ENCODE measurements at regions of chr5 and their contacts with region 1.

Region 1: DNA sequence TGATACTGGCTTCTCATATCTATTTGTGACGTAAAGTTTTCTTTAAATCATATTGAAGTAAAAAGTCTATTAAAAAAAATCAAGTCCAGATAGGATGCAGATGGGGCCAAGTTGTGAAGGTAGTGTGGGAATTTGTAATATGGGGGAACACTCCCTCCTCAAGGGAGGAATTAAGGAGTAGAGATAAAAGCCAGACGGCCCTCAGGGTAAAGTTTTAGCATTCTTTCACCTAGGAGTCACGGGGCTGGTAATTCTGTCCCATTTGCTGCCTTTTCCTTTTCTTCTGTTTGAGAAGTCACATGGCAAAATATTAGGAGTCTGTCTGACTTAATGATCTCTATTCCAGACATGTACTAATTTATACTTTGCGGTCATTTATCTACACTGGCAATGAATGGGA is 61.8 kb downstream of the SNX24 start:
- DNase-seq: no peak
- ATAC-seq: no peak
- H3K4me3 ChIP-seq: no peak overlapping the region
- H3K4me3 Mint-ChIP-seq: no peak overlapping the region
- H3K27ac ChIP-seq: no peak overlapping the region
- H3K27ac Mint-ChIP-seq: no peak overlapping the region
- H3K4me1 ChIP-seq: peaks cover 3 to 9% of the 10 kb centered on the region in 2 donors
- H3K4me1 Mint-ChIP-seq: peaks cover 4 to 11% (median 8%) of the 10 kb centered on the region in 7 donors
- H3K27me3 ChIP-seq: no peaks in the 10 kb centered on the region
- H3K27me3 Mint-ChIP-seq: no peaks in the 10 kb centered on the region

Region 2: DNA sequence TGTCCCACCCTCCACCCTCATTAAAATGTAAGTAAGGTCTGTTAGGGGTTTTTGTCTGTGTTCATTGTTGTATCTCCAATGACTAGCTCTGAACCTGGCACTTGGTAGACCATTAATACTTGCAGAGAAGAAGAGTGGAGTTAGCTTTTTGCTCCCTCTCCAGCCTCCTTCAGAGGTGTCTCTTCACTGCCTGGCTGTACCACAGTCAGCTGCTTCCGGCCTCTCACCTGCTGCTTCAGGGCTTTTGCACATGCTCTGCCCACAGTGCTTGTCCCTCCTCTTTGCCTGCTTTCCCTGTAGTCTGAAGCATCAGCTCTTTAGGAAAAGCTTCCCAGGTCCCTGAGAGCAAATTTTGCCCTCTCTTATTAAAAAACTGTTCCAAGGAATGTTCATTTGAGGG is 21.8 kb after region 1 on chr5:
- CTCF ChIA-PET with region 1: interaction called, 10 read pairs
- POLR2A ChIA-PET with region 1: no interaction called
- intact Hi-C with region 1: no loop called
- DNase-seq: no peak
- ATAC-seq: no peak
- H3K4me3 ChIP-seq: no peak overlapping the region
- H3K4me3 Mint-ChIP-seq: no peak overlapping the region
- H3K27ac ChIP-seq: no peak overlapping the region
- H3K27ac Mint-ChIP-seq: peak overlapping the region in 1 of 9 donors; percentile 23
- H3K4me1 ChIP-seq: no peaks in the 10 kb centered on the region
- H3K4me1 Mint-ChIP-seq: no peaks in the 10 kb centered on the region
- H3K27me3 ChIP-seq: no peaks in the 10 kb centered on the region
- H3K27me3 Mint-ChIP-seq: peaks cover 0 to 4% (median 0%) of the 10 kb centered on the region in 5 donors

Region 3: DNA sequence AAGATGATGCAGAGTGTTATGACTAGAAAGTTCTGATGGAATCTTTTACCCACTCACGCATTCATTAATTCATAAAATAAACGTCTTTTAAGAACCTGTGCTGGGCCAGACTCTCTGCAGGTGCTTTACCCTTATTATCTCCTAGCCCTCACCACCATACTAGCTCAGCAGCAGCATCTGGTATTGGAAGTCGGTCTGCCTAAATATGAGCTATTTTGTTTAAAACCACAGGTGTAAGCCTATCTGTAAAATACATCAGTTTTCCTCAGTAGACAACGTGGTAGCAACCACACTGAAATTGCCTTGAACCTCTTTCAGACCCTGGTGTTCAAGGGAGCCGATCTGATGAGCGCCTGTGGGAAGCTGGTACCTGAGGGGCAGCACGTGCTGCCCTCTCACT is 59.8 kb after region 1 on chr5:
- CTCF ChIA-PET with region 1: no interaction called
- POLR2A ChIA-PET with region 1: no interaction called
- intact Hi-C with region 1: no loop called
- DNase-seq: no peak
- ATAC-seq: no peak
- H3K4me3 ChIP-seq: no peak overlapping the region
- H3K4me3 Mint-ChIP-seq: no peak overlapping the region
- H3K27ac ChIP-seq: no peak overlapping the region
- H3K27ac Mint-ChIP-seq: no peak overlapping the region
- H3K4me1 ChIP-seq: no peaks in the 10 kb centered on the region
- H3K4me1 Mint-ChIP-seq: no peaks in the 10 kb centered on the region
- H3K27me3 ChIP-seq: no peaks in the 10 kb centered on the region
- H3K27me3 Mint-ChIP-seq: no peaks in the 10 kb centered on the region

Region 4: DNA sequence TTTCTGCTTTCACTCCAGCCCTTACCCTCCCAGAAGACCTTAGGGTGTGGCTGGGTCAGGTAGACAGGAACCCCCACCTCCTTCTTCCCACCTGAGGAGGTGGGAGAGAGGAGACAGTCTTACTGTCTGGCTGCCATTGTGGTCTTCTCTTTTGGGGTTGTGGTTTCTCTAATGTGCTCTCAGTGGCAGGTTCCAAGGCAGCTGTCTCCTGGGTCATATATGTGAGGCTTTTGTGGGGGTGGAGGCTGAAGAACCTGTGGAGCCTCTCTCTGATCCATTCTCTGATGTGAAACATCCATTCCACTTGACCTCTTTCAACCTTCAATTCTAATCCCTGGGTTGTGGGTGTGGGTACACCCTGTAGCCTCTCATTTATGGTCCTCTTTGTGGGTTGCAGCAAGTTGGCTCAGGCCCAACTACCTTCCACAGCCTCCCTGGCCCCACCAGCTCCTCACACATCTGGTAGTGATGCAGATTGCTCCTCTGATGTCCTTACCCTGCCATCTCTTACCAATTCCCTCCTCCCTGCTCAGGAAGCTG is 397.6 kb after region 1 on chr5:
- CTCF ChIA-PET with region 1: no interaction called
- POLR2A ChIA-PET with region 1: no interaction called
- intact Hi-C with region 1: no loop called
- DNase-seq: no peak
- ATAC-seq: no peak
- H3K4me3 ChIP-seq: no peak overlapping the region
- H3K4me3 Mint-ChIP-seq: no peak overlapping the region
- H3K27ac ChIP-seq: no peak overlapping the region
- H3K27ac Mint-ChIP-seq: no peak overlapping the region
- H3K4me1 ChIP-seq: no peaks in the 10 kb centered on the region
- H3K4me1 Mint-ChIP-seq: peaks cover 0 to 3% (median 0%) of the 10 kb centered on the region in 7 donors
- H3K27me3 ChIP-seq: no peaks in the 10 kb centered on the region
- H3K27me3 Mint-ChIP-seq: peaks cover 9 to 24% (median 15%) of the 10 kb centered on the region in 5 donors

Region 5: GRCh38 chr5:123929055-123929474 is 1021.8 kb after region 1 on chr5:
- CTCF ChIA-PET with region 1: no interaction called
- POLR2A ChIA-PET with region 1: no interaction called
- intact Hi-C with region 1: no loop called
- DNase-seq: no peak
- ATAC-seq: no peak
- H3K4me3 ChIP-seq: no peak overlapping the region
- H3K4me3 Mint-ChIP-seq: no peak overlapping the region
- H3K27ac ChIP-seq: no peak overlapping the region
- H3K27ac Mint-ChIP-seq: no peak overlapping the region
- H3K4me1 ChIP-seq: no peaks in the 10 kb centered on the region
- H3K4me1 Mint-ChIP-seq: no peaks in the 10 kb centered on the region
- H3K27me3 ChIP-seq: no peaks in the 10 kb centered on the region
- H3K27me3 Mint-ChIP-seq: no peaks in the 10 kb centered on the region

Region 6: DNA sequence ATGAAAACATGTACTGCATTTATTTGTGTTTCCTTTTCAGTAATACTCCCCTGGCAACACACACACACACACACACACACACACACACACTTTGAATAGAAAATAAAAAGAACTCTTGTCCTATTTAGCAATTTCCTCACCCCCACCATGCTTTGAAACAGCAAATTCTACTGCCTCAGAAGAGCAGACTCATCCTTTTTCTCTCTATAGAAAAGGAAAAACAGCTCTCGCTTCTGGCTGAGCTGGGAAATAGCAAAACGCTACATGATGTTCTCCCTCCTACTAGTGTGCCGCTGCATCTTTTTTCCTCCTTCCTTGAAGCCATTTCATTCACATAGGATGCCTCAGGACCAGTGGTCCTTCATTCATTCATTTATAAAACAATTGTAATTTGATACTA is 1058.4 kb after region 1 on chr5:
- CTCF ChIA-PET with region 1: no interaction called
- POLR2A ChIA-PET with region 1: no interaction called
- intact Hi-C with region 1: no loop called
- DNase-seq: no peak
- ATAC-seq: no peak
- H3K4me3 ChIP-seq: no peak overlapping the region
- H3K4me3 Mint-ChIP-seq: no peak overlapping the region
- H3K27ac ChIP-seq: no peak overlapping the region
- H3K27ac Mint-ChIP-seq: no peak overlapping the region
- H3K4me1 ChIP-seq: no peaks in the 10 kb centered on the region
- H3K4me1 Mint-ChIP-seq: no peaks in the 10 kb centered on the region
- H3K27me3 ChIP-seq: no peaks in the 10 kb centered on the region
- H3K27me3 Mint-ChIP-seq: no peaks in the 10 kb centered on the region